ENCODE measurements at regions of chr1 and their contacts with region 1.

Region 1: GRCh38 chr1:36319064-36319463 is 4.4 kb downstream of the EVA1B start:
- DNase-seq: no peak
- H3K4me3 ChIP-seq: no peak overlapping the region
- H3K27ac ChIP-seq: no peak overlapping the region
- H3K4me1 ChIP-seq: peaks cover 10% of the 10 kb centered on the region
- H3K27me3 ChIP-seq: no peaks in the 10 kb centered on the region
- CTCF ChIP-seq: no peak

Region 2: DNA sequence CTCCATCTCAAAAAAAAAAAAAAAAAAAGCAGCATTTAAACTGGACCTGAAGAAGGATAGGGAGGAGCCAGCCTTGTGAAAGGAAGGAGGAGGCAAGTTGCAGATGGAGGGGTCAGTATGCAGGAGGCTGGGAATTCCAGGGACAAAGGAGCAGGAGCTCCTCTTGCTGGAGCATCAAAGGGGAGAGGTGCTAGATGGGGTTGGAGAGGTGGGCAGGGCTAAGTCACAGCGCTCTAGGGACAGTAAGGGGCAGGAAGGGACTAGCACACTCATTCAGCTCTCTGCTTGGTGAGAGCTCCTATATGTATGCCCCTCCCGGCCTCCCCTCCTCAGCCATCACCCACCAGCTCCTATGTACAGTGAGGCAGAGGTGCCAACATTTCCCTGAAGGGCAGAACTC is 136.3 kb before region 1 on chr1:
- CTCF ChIA-PET with region 1: interaction called, 14 read pairs
- POLR2A ChIA-PET with region 1: no interaction called
- intact Hi-C with region 1: no loop called
- DNase-seq: no peak
- H3K4me3 ChIP-seq: no peak overlapping the region
- H3K27ac ChIP-seq: no peak overlapping the region
- H3K4me1 ChIP-seq: no peaks in the 10 kb centered on the region
- H3K27me3 ChIP-seq: no peaks in the 10 kb centered on the region
- CTCF ChIP-seq: no peak

Region 3: GRCh38 chr1:36664571-36665287 is 345.7 kb after region 1 on chr1:
- CTCF ChIA-PET with region 1: no interaction called
- POLR2A ChIA-PET with region 1: no interaction called
- intact Hi-C with region 1: no loop called
- DNase-seq: no peak
- H3K4me3 ChIP-seq: no peak overlapping the region
- H3K27ac ChIP-seq: no peak overlapping the region
- H3K4me1 ChIP-seq: no peaks in the 10 kb centered on the region
- H3K27me3 ChIP-seq: peaks cover 75% of the 10 kb centered on the region
- CTCF ChIP-seq: no peak

Measured in A673 (cell line).